PC-3 (cell line): ENCODE measurements at regions of chr19 and their contacts with region 1.

Region 1: GRCh38 chr19:4676955-4677731 is 7.0 kb upstream of the MYDGF start:
- DNase-seq: peak; percentile 53
- ATAC-seq: peak; percentile 19; the same call in 1 of the 2 replicates
- H3K4me3 ChIP-seq: no peak overlapping the region
- H3K27ac ChIP-seq: no peak overlapping the region
- H3K4me1 ChIP-seq: no peaks in the 10 kb centered on the region
- H3K27me3 ChIP-seq: no peaks in the 10 kb centered on the region
- CTCF ChIP-seq: peak; percentile 75

Region 2: DNA sequence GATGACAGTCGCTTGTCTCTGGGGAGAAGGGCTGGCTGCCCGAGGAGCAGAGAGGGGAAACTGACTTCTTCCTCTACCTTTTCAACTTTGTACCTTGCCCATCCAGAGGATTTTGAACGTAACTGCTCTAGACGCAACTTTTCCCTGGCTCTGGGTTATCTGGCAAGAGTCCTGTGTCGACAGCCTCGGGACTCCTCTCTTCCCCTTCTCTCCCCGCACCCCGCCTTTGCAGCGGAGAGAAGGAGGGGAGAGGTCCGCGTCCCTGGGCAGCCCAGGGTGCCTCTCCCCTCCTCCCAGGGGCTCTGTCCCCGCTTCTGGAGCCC is 277.4 kb before region 1 on chr19:
- CTCF ChIA-PET with region 1: no interaction called
- POLR2A ChIA-PET with region 1: no interaction called
- intact Hi-C with region 1: no loop called
- DNase-seq: peak; percentile 9
- ATAC-seq: peak; percentile 1
- H3K4me3 ChIP-seq: peak overlapping the region; percentile 97
- H3K27ac ChIP-seq: no peak overlapping the region
- H3K4me1 ChIP-seq: peaks cover 24% of the 10 kb centered on the region
- H3K27me3 ChIP-seq: no peaks in the 10 kb centered on the region
- CTCF ChIP-seq: no peak

Region 3: DNA sequence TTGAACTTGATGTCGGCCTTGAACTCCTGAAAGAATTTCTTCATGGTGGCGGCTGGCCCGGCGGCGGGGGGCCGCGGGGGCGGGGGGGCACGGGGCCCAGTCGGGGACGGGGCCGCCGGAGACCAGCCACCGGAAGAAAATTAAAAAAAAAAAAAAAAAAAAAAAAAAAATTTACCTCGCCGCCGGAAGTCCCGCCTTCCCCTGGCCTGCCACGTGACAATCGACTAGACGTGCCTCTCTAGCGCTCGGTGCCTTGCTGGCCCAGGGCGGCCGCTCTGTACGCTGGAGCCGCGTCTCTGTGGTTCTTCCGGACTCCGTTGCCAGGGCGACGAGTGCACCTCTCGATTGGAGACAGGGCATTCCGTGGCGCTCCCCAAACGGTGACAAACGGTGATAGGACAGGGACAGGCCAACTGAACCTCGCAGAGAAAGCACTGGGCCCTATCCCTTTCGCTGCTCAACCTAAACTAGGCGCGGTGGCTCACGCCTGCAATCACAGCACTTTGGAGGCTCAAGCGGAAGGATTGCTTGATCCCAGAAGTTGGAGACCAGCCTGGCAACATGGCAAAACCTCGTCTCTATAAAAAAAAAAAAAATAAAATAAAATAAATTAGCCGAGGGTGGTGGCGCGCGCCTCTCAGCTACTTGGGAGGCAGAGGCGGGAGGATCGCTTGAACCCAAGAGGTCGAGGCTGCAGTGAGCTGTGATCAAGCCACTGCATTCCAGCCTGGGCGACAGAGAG is 219.3 kb before region 1 on chr19 and contains the start of gene UBXN6:
- CTCF ChIA-PET with region 1: no interaction called
- POLR2A ChIA-PET with region 1: no interaction called
- intact Hi-C with region 1: no loop called
- DNase-seq: peak; percentile 94
- ATAC-seq: peak; percentile 83
- H3K4me3 ChIP-seq: peak within 1 kb of the TSS; percentile 81
- H3K27ac ChIP-seq: peak within 1 kb of the TSS; percentile 5; the same call in 1 of the 2 replicates
- H3K4me1 ChIP-seq: no peaks in the 10 kb centered on the region; the same call in 1 of the 2 replicates
- H3K27me3 ChIP-seq: no peaks in the 10 kb centered on the region
- CTCF ChIP-seq: no peak
- total RNA-seq, gene UBXN6: 64.0 and 86.1 TPM in 2 replicates

Region 4: DNA sequence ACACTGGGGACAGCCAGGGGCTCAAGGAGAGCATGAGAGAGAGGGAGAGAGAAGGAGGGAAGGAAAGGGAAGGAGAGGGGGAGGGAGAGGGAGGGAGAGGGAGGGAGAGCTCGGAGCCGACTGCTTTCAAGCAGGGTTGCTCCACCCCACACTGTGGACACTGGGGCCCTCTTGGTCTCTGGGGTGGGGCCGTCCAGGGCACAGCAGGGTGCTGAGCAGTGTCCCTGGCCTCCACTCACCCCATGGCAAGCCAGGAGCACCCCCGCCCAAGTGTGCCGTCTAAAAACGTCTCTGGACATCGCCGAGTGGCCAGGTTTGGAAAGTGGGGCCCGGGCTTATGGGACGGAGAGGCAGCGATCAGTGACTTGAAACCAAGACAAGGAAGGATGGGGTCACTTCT is 25.6 kb after region 1 on chr19:
- CTCF ChIA-PET with region 1: no interaction called
- POLR2A ChIA-PET with region 1: no interaction called
- intact Hi-C with region 1: no loop called
- DNase-seq: no peak
- ATAC-seq: no peak
- H3K4me3 ChIP-seq: no peak overlapping the region
- H3K27ac ChIP-seq: no peak overlapping the region
- H3K4me1 ChIP-seq: peaks cover 2% of the 10 kb centered on the region; the same call in 1 of the 2 replicates
- H3K27me3 ChIP-seq: no peaks in the 10 kb centered on the region
- CTCF ChIP-seq: no peak

Region 5: GRCh38 chr19:4713384-4713951 is 36.3 kb after region 1 on chr19:
- CTCF ChIA-PET with region 1: interaction called, 22 read pairs
- POLR2A ChIA-PET with region 1: interaction called, 3 read pairs
- intact Hi-C with region 1: no loop called
- DNase-seq: peak; percentile 100
- ATAC-seq: peak; percentile 88
- H3K4me3 ChIP-seq: peak overlapping the region; percentile 33; the same call in 1 of the 2 replicates
- H3K27ac ChIP-seq: peak overlapping the region; percentile 85
- H3K4me1 ChIP-seq: peaks cover 53% of the 10 kb centered on the region
- H3K27me3 ChIP-seq: no peaks in the 10 kb centered on the region
- CTCF ChIP-seq: no peak